Psoas muscle (tissue), 8 donors: ENCODE measurements at regions of chr5 and their contacts with region 1.

Region 1: DNA sequence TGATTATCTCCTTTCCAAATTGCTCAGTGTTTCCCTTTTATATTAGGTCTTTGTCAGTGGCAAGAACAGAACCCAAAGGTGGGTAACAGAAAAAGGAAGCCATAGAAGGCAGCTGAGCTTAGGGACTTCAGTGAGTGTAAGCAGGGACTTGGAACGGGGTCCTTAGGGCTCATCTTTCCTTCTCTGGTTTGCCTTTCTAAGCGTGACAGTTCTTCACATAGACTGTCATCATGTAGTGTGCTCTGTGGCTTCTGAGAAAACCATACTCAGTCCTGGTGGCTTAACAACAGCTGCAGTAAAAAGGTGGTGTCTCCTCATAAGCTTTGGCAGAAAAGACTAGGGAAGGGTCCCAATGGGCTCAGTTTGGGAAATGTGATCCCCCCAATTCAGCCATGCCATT is 108.8 kb downstream of the SLC12A2 start:
- DNase-seq: no peak
- ATAC-seq: no peak
- H3K4me3 ChIP-seq: no peak overlapping the region
- H3K27ac ChIP-seq: peak overlapping the region; percentile 88
- H3K4me1 ChIP-seq: peaks cover 14% of the 10 kb centered on the region
- H3K27me3 ChIP-seq: no peaks in the 10 kb centered on the region
- CTCF ChIP-seq: no peak

Region 2: GRCh38 chr5:128154943-128155342 is 37.4 kb before region 1 on chr5:
- intact Hi-C with region 1: loop called (anchors 5 kb)
- DNase-seq: no peak
- ATAC-seq: no peak
- H3K4me3 ChIP-seq: no peak overlapping the region
- H3K27ac ChIP-seq: no peak overlapping the region
- H3K4me1 ChIP-seq: no peaks in the 10 kb centered on the region
- H3K27me3 ChIP-seq: no peaks in the 10 kb centered on the region
- CTCF ChIP-seq: no peak

Region 3: GRCh38 chr5:128290152-128290864 is 97.9 kb after region 1 on chr5:
- intact Hi-C with region 1: no loop called
- DNase-seq: no peak
- ATAC-seq: no peak
- H3K4me3 ChIP-seq: no peak overlapping the region
- H3K27ac ChIP-seq: no peak overlapping the region
- H3K4me1 ChIP-seq: no peaks in the 10 kb centered on the region
- H3K27me3 ChIP-seq: no peaks in the 10 kb centered on the region
- CTCF ChIP-seq: no peak